ENCODE measurements at regions of chr4 and their contacts with region 1.

Region 1: DNA sequence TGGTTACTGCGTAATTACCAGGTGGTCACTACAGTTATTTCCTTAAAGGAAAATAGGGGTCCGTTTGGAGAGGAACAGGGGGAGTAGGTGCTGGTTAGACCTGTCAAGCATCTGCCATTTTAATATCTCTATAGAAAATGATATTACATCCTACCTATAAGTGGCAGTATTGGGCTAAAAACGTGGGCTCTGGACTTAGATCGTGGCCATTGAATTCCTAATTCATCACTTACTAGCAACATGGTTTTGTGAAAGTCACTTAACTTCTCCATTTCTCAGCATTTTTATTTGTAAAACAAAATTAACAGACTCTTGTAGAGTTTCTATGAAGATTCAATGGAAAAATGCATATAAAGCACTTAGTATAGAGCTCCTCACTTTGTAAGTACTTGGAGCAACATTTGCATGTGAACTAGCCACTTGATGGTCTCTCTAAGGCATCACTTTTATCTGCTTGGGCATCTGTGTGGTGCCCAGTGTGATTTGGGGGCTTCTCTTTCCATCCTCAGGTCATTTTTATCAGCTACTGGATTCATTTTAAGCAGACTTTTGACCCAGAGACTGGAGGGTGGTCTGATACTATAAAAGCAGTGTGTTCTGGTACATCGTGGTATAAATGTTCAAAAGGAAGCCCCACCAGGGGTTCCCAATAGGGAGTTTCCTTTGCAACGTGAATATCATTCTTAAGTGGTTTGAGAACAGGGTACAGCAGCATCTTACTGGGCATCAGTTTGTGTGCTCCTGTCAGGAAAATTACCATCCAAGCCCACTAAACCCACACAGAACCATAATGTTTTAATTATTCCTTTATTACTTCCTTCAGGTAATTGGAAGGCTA is 42.7 kb upstream of the RASSF6 start:
- DNase-seq: peak; percentile 19 to 61
- ATAC-seq: peak; percentile 54 to 85; a peak in 4 of 6 replicates
- H3K4me3 ChIP-seq: no peak overlapping the region
- H3K27ac ChIP-seq: peak overlapping the region; percentile 54 to 83
- H3K4me1 ChIP-seq: peaks cover 5% of the 10 kb centered on the region; the same call in 2 of the 3 replicates
- CTCF ChIP-seq: peak; percentile 63
- EP300 ChIP-seq: no peak
- POLR2A ChIP-seq: no peak
- RAD21 ChIP-seq: peak; percentile 83 to 84

Region 2: DNA sequence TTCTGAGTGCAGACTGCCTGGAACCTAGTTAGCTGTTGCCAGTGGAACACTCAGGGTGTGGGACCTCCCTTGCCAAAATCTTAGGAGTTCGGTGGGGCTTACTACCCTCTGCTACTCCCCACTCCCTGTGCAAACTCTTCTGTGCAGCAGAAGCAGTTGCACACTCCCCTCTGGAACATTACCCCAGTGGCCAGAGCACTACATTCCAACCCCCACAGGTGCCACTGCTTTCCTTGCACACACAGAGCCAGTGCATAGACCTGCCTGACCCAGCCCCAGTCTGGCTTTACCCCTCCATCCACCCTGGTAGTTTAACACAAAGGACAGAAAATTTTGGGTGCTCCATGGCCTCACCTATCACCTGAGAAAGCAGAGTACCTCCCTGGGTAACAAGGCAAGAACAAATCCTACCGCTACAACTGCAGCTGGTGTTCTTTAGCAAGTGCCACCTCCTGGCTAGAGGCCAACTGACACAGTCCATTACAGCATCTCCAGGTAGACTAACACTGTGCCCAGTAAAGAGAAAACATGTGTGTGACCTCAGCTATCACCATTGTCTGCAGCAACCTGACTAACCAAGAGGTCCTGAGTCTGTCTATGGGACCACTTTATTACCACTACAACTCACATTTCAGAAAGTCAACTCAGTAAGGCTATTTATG is 31.2 kb before region 1 on chr4:
- CTCF ChIA-PET with region 1: no interaction called
- POLR2A ChIA-PET with region 1: no interaction called
- DNase-seq: no peak
- ATAC-seq: no peak
- H3K4me3 ChIP-seq: no peak overlapping the region
- H3K27ac ChIP-seq: no peak overlapping the region
- H3K4me1 ChIP-seq: no peaks in the 10 kb centered on the region
- CTCF ChIP-seq: no peak
- EP300 ChIP-seq: no peak
- POLR2A ChIP-seq: no peak
- RAD21 ChIP-seq: no peak

Region 3: GRCh38 chr4:73751166-73751565 is 88.2 kb after region 1 on chr4:
- CTCF ChIA-PET with region 1: no interaction called
- POLR2A ChIA-PET with region 1: no interaction called
- DNase-seq: no peak
- ATAC-seq: no peak
- H3K4me3 ChIP-seq: no peak overlapping the region
- H3K27ac ChIP-seq: no peak overlapping the region
- H3K4me1 ChIP-seq: no peaks in the 10 kb centered on the region
- CTCF ChIP-seq: no peak
- EP300 ChIP-seq: no peak
- POLR2A ChIP-seq: no peak
- RAD21 ChIP-seq: no peak

Region 4: DNA sequence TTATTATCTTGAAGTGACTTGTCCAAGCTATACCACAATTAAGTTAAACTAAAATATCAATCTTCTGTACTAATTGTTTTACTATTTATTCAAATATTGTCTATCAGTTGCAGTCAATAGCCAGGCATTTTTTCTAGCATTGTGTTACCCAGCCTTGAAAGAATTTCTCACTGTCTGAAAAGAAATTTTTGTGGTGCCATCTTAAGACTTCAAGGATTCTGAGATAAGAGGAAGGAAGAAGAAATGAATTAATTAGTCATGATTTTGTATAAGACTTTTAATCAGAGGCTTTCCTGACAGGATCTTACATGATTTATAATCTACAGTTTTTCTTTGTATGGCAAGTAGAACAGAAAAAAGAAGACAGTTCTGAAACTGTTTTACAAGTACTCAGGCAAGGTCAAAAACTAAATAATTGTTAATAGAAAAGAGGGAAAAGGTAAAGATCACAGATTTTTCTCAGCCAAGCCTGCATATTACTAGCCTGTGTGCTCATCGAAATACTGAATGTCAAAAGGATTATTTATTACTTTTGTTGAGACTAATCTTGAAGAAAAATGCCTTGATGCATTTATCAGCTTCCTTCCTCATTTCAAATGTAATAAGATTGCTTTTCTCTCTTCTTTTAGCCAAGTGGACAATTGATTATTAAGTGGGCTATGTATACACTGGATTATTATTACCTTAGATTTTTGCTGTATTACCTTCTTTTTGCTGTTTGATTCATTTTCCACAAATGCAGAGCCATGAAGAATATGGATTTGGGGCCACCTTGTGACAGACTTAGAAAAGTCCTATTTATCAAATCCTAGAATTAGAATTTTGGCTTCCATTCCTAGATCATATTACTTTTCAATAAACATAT is 260.1 kb after region 1 on chr4:
- CTCF ChIA-PET with region 1: interaction called, 17 read pairs
- POLR2A ChIA-PET with region 1: no interaction called
- DNase-seq: peak in 1 of 2 experiments; percentile 47
- ATAC-seq: no peak
- H3K4me3 ChIP-seq: no peak overlapping the region
- H3K27ac ChIP-seq: peak overlapping the region; percentile 38 to 46; a peak in 3 of 6 replicates
- H3K4me1 ChIP-seq: peaks cover 12% of the 10 kb centered on the region
- CTCF ChIP-seq: peak; percentile 76
- EP300 ChIP-seq: no peak
- POLR2A ChIP-seq: no peak
- RAD21 ChIP-seq: peak; percentile 82 to 88

Measured in A549 (cell line).